Calu3 (cell line): ENCODE measurements at regions of chr1 and their contacts with region 1.

Region 1: GRCh38 chr1:9110669-9111356 is 18.1 kb downstream of the GPR157 start:
- DNase-seq: peak; percentile 94
- H3K4me3 Mint-ChIP-seq: no peak overlapping the region
- H3K27ac Mint-ChIP-seq: no peak overlapping the region
- H3K4me1 Mint-ChIP-seq: no peaks in the 10 kb centered on the region
- H3K27me3 Mint-ChIP-seq: no peaks in the 10 kb centered on the region
- CTCF ChIP-seq: peak; percentile 66

Region 2: GRCh38 chr1:9196129-9197040 is 85.6 kb after region 1 on chr1:
- CTCF ChIA-PET with region 1: interaction called, 6 read pairs
- intact Hi-C with region 1: loop called (anchors 1 kb)
- DNase-seq: peak; percentile 61
- H3K4me3 Mint-ChIP-seq: no peak overlapping the region
- H3K27ac Mint-ChIP-seq: no peak overlapping the region
- H3K4me1 Mint-ChIP-seq: peaks cover 24% of the 10 kb centered on the region
- H3K27me3 Mint-ChIP-seq: peaks cover 48% of the 10 kb centered on the region
- CTCF ChIP-seq: peak; percentile 72

Region 3: DNA sequence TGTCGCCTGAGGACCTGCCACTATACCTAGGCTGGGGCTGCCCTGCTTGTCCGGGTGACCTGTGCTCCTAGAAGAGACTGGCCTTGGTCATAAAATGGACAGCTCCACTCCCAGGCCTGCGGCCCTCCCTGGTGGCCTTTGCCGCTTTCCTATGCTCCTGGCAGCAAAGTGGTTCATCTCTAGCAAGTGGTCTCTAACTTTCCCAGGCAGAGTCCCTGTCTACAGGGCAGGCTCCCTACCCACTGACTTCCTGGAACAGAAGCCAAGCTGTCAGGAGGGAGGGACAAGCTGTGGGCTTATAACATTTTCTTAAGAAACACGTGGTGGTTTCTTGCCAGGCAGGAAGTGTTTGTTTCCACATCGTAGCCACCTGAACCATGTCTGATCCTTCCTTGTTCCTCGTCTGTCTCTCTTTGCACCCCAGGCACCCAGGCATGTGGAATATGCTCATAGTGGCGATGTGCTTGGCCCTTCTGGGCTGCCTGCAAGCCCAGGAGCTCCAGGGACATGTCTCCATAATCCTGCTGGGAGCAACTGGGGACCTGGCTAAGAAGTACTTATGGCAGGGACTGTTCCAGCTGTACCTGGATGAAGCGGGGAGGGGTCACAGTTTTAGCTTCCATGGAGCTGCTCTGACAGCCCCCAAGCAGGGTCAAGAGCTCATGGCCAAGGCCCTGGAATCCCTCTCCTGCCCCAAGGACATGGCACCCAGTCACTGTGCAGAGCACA is 133.9 kb after region 1 on chr1:
- CTCF ChIA-PET with region 1: interaction called, 11 read pairs
- intact Hi-C with region 1: no loop called
- DNase-seq: peak; percentile 44
- H3K4me3 Mint-ChIP-seq: no peak overlapping the region
- H3K27ac Mint-ChIP-seq: no peak overlapping the region
- H3K4me1 Mint-ChIP-seq: no peaks in the 10 kb centered on the region
- H3K27me3 Mint-ChIP-seq: no peaks in the 10 kb centered on the region
- CTCF ChIP-seq: no peak

Region 4: GRCh38 chr1:9260059-9260766 is 149.4 kb after region 1 on chr1:
- CTCF ChIA-PET with region 1: no interaction called
- intact Hi-C with region 1: no loop called
- DNase-seq: no peak
- H3K4me3 Mint-ChIP-seq: no peak overlapping the region
- H3K27ac Mint-ChIP-seq: no peak overlapping the region
- H3K4me1 Mint-ChIP-seq: no peaks in the 10 kb centered on the region
- H3K27me3 Mint-ChIP-seq: no peaks in the 10 kb centered on the region
- CTCF ChIP-seq: no peak